GM10248 (cell line): ENCODE measurements at regions of chr5 and their contacts with region 1.

Region 1: GRCh38 chr5:128011339-128011738 is 72.2 kb upstream of the SLC12A2 start:
- DNase-seq: no peak
- CTCF ChIP-seq: no peak

Region 2: DNA sequence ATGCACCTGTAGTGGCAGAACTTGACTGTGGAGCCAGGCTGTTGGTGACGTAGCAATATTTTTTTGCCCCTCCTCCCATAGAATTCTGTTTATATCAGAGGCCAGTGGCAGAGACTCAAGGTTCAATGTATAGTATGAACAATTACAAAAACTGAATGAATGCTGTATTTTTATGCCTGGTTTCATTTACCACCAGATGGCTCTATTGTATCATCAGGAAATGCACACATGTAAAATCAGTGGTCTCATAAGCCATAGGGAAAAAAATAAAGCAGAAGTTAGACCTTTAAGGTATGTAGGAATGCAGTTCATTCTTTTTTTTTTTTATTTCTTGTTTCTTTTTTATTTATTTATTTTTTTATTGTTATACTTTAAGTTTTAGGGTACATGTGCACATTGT is 264.6 kb before region 1 on chr5:
- CTCF ChIA-PET with region 1: no interaction called
- POLR2A ChIA-PET with region 1: no interaction called
- DNase-seq: no peak
- CTCF ChIP-seq: peak; percentile 34

Region 3: DNA sequence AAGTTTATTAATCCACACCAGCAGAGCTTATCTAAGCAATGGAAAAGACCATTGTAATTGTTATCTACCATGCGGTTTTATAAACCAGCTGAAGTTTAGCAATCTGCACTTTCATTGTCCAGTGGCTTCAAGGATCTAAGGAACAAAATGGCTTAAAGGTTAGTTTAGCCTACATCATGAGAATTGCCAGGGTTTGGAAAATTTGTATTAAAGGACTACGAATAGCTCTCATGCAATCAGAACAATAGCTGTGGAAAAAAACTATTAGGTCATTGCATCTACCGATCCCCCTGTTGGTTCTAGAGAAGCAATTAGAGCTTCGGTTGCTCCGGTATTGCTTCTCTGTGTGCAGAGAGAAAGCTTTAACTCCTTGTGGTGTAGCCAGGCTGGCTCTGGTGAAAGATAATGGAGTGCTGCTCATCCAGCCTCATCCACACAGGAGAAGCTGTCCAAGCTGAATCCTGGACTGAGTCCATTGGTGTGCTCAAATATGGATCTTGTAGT is 14.1 kb before region 1 on chr5:
- CTCF ChIA-PET with region 1: interaction called, 12 read pairs
- POLR2A ChIA-PET with region 1: no interaction called
- DNase-seq: no peak
- CTCF ChIP-seq: no peak